Calu3 (cell line): ENCODE measurements at regions of chrX and their contacts with region 1.

Region 1: DNA sequence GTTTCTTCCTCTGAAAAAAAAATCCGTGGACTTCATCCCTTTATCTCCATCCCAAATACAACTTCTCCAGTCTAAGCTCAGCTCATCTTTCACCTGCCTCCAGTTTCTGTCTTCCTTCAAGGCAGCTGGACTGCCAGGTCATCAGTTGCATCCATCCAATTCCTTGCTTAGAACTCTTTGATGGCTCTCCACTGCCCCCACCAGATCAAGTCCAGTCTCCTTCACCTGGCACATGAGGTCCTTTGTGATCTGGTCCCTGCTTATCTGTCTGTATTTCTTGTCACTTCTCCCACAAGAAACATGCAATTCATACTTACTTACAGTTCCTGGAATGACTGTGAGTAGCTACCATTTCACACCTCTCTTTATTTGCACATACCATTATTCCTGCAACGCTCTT is 33.8 kb downstream of the OTUD6A start:
- DNase-seq: peak; percentile 35
- H3K4me3 Mint-ChIP-seq: no peak overlapping the region
- H3K27ac Mint-ChIP-seq: no peak overlapping the region
- H3K4me1 Mint-ChIP-seq: peaks cover 7% of the 10 kb centered on the region
- H3K27me3 Mint-ChIP-seq: no peaks in the 10 kb centered on the region
- CTCF ChIP-seq: peak; percentile 21

Region 2: GRCh38 chrX:69493193-69493592 is 602.9 kb before region 1 on chrX:
- CTCF ChIA-PET with region 1: interaction called, 9 read pairs
- intact Hi-C with region 1: loop called (anchors 5 kb)
- DNase-seq: peak; percentile 69
- H3K4me3 Mint-ChIP-seq: no peak overlapping the region
- H3K27ac Mint-ChIP-seq: no peak overlapping the region
- H3K4me1 Mint-ChIP-seq: peaks cover 11% of the 10 kb centered on the region
- H3K27me3 Mint-ChIP-seq: peaks cover 13% of the 10 kb centered on the region
- CTCF ChIP-seq: peak; percentile 48

Region 3: DNA sequence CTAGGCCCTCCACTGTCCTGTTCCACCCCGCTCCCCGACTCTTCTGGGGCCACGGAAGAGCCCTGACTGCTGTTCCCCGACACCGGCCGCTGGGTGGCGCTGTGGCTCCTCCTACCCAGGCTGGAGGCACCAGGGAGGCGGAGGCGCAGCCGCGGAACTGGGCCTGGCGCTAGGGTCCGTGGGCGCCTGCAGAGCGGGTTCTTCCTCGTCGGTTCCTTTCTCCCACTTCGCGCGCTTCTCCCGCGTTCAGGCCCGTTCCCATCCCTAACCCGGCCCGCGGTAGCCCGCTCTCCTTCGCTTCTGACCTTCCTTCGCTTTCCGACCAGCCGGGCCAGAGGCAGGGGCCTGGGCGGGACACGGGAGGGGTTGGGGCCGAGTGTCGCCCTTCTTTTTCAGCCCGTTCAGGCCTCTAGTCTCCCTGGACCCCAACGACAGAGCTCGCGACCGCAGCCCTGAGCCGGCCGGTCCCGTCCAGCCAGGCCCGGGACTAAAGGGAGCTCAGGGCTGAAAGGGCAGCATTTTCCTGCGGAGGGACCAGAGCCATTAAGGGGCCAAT is 557.7 kb before region 1 on chrX:
- CTCF ChIA-PET with region 1: interaction called, 9 read pairs
- intact Hi-C with region 1: loop called (anchors 5 kb)
- DNase-seq: peak; percentile 82
- H3K4me3 Mint-ChIP-seq: peak overlapping the region; percentile 82
- H3K27ac Mint-ChIP-seq: peak overlapping the region; percentile 77
- H3K4me1 Mint-ChIP-seq: peaks cover 12% of the 10 kb centered on the region
- H3K27me3 Mint-ChIP-seq: no peaks in the 10 kb centered on the region
- CTCF ChIP-seq: peak; percentile 75

Region 4: GRCh38 chrX:70030301-70030767 is 65.7 kb before region 1 on chrX:
- CTCF ChIA-PET with region 1: interaction called, 10 read pairs
- intact Hi-C with region 1: loop called (anchors 5 kb)
- DNase-seq: peak; percentile 73
- H3K4me3 Mint-ChIP-seq: no peak overlapping the region
- H3K27ac Mint-ChIP-seq: no peak overlapping the region
- H3K4me1 Mint-ChIP-seq: peaks cover 40% of the 10 kb centered on the region
- H3K27me3 Mint-ChIP-seq: no peaks in the 10 kb centered on the region
- CTCF ChIP-seq: peak; percentile 70

Region 5: GRCh38 chrX:70133303-70134115 is 37.5 kb after region 1 on chrX and contains the start of gene IGBP1:
- CTCF ChIA-PET with region 1: interaction called, 11 read pairs
- intact Hi-C with region 1: no loop called
- DNase-seq: peak; percentile 89
- H3K4me3 Mint-ChIP-seq: peak within 1 kb of the TSS; percentile 85
- H3K27ac Mint-ChIP-seq: peak within 1 kb of the TSS; percentile 81
- H3K4me1 Mint-ChIP-seq: peaks cover 35% of the 10 kb centered on the region
- H3K27me3 Mint-ChIP-seq: no peaks in the 10 kb centered on the region
- CTCF ChIP-seq: peak; percentile 56
- total RNA-seq, gene IGBP1: 44.8 and 48.3 TPM in 2 replicates